PC-3 (cell line): ENCODE measurements at regions of chr20 and their contacts with region 1.

Region 1: GRCh38 chr20:3811467-3812258 is 8.7 kb upstream of the AP5S1 start:
- DNase-seq: peak; percentile 99
- ATAC-seq: peak; percentile 50
- H3K4me3 ChIP-seq: peak overlapping the region; percentile 67
- H3K27ac ChIP-seq: peak overlapping the region; percentile 98
- H3K4me1 ChIP-seq: peaks cover 56% of the 10 kb centered on the region
- H3K27me3 ChIP-seq: no peaks in the 10 kb centered on the region
- CTCF ChIP-seq: no peak

Region 2: DNA sequence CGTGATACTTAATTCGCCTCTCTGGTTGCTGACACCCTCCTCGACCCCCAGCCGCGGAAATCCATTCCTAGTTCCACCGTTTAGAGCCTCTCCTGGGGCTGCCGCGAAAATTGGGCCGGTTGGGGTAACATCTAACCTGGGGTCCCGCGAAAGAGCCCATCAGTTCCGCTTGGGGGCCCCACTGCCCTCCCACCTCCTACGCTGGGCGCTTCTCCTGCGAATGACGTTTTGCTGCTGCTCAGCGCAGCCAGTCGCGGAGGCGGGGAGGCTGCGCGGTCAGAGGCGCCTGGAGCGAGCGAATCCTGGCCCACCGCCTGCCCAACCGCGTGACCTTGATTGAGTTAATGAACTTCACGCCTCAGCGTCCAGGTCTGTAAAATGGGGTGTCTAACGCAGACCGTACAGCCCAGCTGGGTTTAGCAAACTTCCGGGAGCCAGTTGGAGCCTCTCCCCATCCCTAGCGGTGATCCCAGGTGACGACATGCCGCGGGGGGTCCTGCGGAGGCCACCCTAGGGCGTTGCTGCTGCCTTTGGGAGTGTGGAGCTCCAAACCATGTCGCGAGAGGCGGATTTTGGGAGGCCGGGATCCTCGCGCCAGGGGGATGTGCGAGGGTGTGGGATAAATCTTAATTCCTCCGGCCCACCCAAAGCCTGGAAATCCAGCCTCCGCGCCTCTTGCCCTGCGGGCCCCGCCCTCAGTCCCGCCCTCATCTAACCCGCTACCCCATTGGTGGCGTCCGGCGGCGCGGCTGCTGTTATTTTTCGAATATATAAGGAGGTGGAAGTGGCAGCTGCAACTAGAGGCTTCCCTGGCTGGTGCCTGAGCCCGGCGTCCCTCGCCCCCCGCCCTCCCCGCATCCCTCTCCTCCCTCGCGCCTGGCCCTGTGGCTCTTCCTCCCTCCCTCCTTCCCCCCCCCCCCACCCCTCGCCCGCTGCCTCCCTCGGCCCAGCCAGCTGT is 15.9 kb before region 1 on chr20 and contains the start of gene CDC25B:
- CTCF ChIA-PET with region 1: no interaction called
- POLR2A ChIA-PET with region 1: no interaction called
- intact Hi-C with region 1: loop called (anchors 1 kb)
- DNase-seq: peak; percentile 96
- ATAC-seq: peak; percentile 83
- H3K4me3 ChIP-seq: peak within 1 kb of the TSS; percentile 99
- H3K27ac ChIP-seq: peak within 1 kb of the TSS; percentile 79
- H3K4me1 ChIP-seq: peaks cover 26% of the 10 kb centered on the region
- H3K27me3 ChIP-seq: no peaks in the 10 kb centered on the region
- CTCF ChIP-seq: peak; percentile 50
- total RNA-seq, gene CDC25B: 89.7 and 106 TPM in 2 replicates